ENCODE measurements at regions of chr15 and their contacts with region 1.

Region 1: DNA sequence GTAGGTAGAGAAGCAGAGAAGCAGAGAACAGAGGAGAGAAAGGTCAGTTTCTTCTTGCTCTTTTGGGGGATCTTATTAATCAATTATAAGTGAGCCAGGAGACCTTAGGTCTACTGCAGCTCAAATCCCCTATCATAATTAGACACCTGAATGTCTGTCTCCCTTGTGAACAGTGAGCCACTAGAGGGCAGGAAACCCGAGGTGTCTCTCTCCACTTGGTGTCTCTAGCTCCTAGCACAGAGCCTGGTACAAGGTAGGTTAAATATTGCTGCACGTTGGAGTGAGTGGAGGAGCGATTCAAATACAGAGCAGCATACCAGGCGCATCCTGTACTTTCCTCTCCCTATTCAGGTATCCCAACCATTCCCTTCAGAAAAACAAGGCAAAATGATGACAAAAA is 2.0 kb upstream of the ST8SIA2 start:
- DNase-seq: no peak
- H3K4me3 ChIP-seq: no peak overlapping the region
- H3K27ac ChIP-seq: no peak overlapping the region
- H3K4me1 ChIP-seq: no peaks in the 10 kb centered on the region; a peak in 1 of 4 replicates
- H3K27me3 ChIP-seq: no peaks in the 10 kb centered on the region
- CTCF ChIP-seq: no peak
- EP300 ChIP-seq: no peak
- RAD21 ChIP-seq: peak; percentile 54

Region 2: GRCh38 chr15:92377083-92377789 is 14.4 kb before region 1 on chr15:
- CTCF ChIA-PET with region 1: interaction called, 12 read pairs
- POLR2A ChIA-PET with region 1: no interaction called
- DNase-seq: no peak
- H3K4me3 ChIP-seq: no peak overlapping the region
- H3K27ac ChIP-seq: no peak overlapping the region
- H3K4me1 ChIP-seq: no peaks in the 10 kb centered on the region
- H3K27me3 ChIP-seq: no peaks in the 10 kb centered on the region
- CTCF ChIP-seq: no peak
- EP300 ChIP-seq: no peak
- RAD21 ChIP-seq: no peak